HepG2 (cell line): ENCODE measurements at regions of chr20 and their contacts with region 1.

Region 1: DNA sequence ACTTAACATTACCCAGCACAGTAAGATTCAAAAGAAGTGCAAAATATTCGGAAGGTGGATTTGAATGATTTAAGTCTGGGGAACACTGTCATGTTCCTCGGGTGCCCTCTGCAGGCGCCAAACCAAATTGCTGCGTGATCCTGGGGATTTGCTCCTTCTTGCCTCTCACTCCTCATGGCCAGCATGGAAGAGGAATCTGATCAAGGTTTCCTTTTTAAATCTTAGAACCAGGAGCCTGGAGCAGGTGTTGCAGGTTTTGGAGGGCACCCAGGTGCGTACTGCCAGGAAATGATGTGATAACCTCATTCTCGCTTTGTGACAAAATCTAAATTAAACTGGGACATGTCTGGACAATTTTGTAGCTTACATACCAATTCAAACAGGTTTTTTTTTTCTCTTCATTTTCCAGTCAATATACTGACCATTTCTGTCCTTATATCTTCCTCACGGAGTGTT is 8.1 kb upstream of the PFDN4 start:
- DNase-seq: peak; percentile 82
- ATAC-seq: no peak
- H3K4me3 ChIP-seq: no peak overlapping the region
- H3K27ac ChIP-seq: no peak overlapping the region
- H3K4me1 ChIP-seq: peaks cover 51% of the 10 kb centered on the region
- H3K27me3 ChIP-seq: peaks cover 0 to 11% of the 10 kb centered on the region in 2 experiments; a peak in 1 of 5 replicates
- CTCF ChIP-seq: peak; percentile 95
- EP300 ChIP-seq: no peak
- POLR2A ChIP-seq: no peak
- RAD21 ChIP-seq: peak; percentile 97

Region 2: DNA sequence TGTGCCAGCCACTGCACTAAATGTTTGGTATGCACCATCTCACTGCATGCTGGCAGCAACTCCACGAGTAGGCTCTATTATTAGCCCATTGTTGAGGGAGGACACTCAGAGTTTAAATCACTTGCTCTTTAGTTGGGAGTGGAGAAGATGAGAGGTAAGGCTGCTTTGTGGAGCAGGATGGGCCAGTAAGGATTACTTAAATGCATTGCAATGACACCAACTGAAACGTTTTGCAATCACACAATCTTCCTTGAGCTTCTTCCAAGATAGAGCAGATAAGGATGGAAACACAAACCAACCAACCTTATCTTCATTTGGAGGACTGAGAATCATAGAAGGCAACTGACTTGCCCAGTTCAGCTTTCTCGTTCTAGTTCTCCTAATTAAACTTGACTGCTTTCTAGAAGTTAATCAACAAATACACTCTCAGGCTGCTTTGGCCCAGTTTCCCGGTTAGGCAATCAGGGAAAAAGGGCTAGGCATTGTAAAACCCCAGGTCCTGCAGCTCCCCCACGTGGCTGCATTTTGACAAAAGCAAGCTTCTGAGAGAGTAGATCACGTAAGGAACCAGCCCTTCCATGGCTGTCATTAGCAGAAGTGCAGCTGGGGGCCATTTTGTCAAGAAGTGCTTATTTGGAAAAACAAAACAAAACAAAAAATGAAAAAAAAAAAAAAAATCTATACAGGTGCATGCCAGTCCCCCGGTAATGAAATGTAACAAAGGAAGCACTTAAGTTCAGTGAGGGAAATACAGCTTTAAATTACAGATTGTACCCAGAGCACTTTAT is 260.0 kb before region 1 on chr20:
- CTCF ChIA-PET with region 1: interaction called, 5 read pairs
- POLR2A ChIA-PET with region 1: no interaction called
- in situ Hi-C with region 1: loop called (anchors 5 kb)
- intact Hi-C with region 1: loop called (anchors 2 kb)
- DNase-seq: peak; percentile 95
- ATAC-seq: peak; percentile 91
- H3K4me3 ChIP-seq: no peak overlapping the region; a peak in 1 of 6 replicates
- H3K27ac ChIP-seq: no peak overlapping the region
- H3K4me1 ChIP-seq: peaks cover 83% of the 10 kb centered on the region
- H3K27me3 ChIP-seq: no peaks in the 10 kb centered on the region; a peak in 1 of 5 replicates
- CTCF ChIP-seq: peak; percentile 94
- EP300 ChIP-seq: no peak
- POLR2A ChIP-seq: no peak
- RAD21 ChIP-seq: peak; percentile 95

Region 3: DNA sequence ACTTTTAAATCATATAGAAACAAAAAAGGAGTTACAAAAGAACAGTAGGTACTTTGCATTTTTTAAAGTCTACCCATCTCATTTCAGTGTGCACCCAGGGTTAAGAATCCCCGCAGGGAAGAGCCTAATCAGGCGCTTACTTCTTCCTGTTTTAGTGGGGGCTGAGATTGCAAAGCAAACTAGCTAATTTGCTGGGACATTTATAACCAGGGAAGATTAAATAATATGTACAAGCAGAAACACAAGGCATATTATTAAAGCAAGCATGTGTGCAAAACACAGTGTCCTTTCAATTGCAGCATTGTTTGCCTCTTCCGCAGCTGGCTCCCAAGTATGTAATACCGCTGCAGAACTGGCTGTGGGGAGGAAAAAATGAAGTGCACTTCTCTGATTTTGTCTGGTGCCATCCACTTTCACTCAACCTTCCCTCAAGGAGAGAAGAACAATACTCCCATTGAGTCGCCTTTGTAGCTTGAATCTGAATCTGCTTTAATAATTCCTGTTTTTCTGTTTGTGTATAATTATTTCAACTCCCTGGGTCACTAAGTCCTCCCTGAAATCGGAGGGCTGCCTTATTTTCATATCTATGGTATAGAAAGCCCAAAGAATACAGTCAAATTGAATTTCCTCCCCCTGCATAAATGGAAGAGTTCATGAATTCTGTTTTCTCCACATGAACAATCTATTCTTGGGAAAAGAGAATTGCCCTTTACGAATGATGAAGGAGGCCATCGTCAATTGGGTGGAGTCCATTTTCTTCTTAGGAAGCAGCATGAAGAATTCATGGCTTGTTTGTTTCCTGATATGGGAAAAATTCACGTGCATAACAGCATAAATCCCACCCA is 106.1 kb before region 1 on chr20:
- CTCF ChIA-PET with region 1: interaction called, 358 read pairs
- POLR2A ChIA-PET with region 1: interaction called, 40 read pairs
- in situ Hi-C with region 1: loop called (anchors 5 kb)
- intact Hi-C with region 1: loop called (anchors 1 kb)
- DNase-seq: no peak
- ATAC-seq: no peak
- H3K4me3 ChIP-seq: no peak overlapping the region
- H3K27ac ChIP-seq: no peak overlapping the region
- H3K4me1 ChIP-seq: peaks cover 23% of the 10 kb centered on the region
- H3K27me3 ChIP-seq: peaks cover 0 to 6% of the 10 kb centered on the region in 2 experiments; a peak in 1 of 5 replicates
- CTCF ChIP-seq: no peak
- EP300 ChIP-seq: no peak
- POLR2A ChIP-seq: no peak
- RAD21 ChIP-seq: no peak

Region 4: GRCh38 chr20:54115151-54115854 is 84.4 kb before region 1 on chr20:
- CTCF ChIA-PET with region 1: interaction called, 5 read pairs
- POLR2A ChIA-PET with region 1: interaction called, 18 read pairs
- in situ Hi-C with region 1: no loop called
- intact Hi-C with region 1: no loop called
- DNase-seq: no peak
- ATAC-seq: peak; percentile 31
- H3K4me3 ChIP-seq: no peak overlapping the region; a peak in 1 of 6 replicates
- H3K27ac ChIP-seq: peak overlapping the region; percentile 83
- H3K4me1 ChIP-seq: peaks cover 96% of the 10 kb centered on the region
- H3K27me3 ChIP-seq: no peaks in the 10 kb centered on the region
- CTCF ChIP-seq: no peak
- EP300 ChIP-seq: no peak
- POLR2A ChIP-seq: no peak
- RAD21 ChIP-seq: 0 out of 2 replicates have a peak, but pooled peaks have one; percentile 17

Region 5: DNA sequence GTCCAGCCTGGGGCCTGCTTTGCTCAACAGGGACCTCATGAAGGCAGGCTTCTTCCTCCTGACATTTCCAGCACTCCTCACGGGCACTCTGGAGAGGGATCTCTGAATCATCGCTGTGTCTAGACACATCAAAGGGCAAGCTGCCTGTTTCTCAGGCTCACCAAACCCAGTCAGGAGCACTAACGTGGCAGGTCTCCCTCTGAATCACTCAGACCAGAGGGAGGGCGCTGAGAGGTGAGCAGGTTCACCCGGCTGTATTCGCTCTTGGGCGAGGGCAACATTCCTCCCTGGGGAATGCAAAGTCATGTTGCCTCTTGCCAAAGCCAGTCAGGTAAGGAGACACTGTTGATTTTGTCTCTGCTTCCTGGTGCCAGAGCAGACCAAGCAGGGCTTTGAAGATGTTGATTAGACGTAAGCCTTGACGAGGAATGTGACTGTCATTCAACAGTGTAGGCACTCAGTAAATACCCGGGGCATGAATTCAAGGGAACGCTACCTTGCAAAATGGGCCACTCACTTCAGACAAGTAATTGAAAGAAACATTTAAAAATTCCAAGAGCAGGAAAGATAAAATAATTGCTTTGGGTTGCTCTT is 76.1 kb before region 1 on chr20:
- CTCF ChIA-PET with region 1: interaction called, 6 read pairs
- POLR2A ChIA-PET with region 1: interaction called, 45 read pairs
- in situ Hi-C with region 1: no loop called
- intact Hi-C with region 1: loop called (anchors 1 kb)
- DNase-seq: peak; percentile 100
- ATAC-seq: peak; percentile 98
- H3K4me3 ChIP-seq: peak overlapping the region in 2 of 3 experiments; percentile 30 to 59; a peak in 5 of 6 replicates
- H3K27ac ChIP-seq: peak overlapping the region; percentile 98
- H3K4me1 ChIP-seq: peaks cover 87% of the 10 kb centered on the region
- H3K27me3 ChIP-seq: no peaks in the 10 kb centered on the region
- CTCF ChIP-seq: peak; percentile 44; the same call in 1 of the 2 replicates
- EP300 ChIP-seq: peak; percentile 99 to 100
- POLR2A ChIP-seq: peak; percentile 77 to 97
- RAD21 ChIP-seq: peak; percentile 87

Region 6: DNA sequence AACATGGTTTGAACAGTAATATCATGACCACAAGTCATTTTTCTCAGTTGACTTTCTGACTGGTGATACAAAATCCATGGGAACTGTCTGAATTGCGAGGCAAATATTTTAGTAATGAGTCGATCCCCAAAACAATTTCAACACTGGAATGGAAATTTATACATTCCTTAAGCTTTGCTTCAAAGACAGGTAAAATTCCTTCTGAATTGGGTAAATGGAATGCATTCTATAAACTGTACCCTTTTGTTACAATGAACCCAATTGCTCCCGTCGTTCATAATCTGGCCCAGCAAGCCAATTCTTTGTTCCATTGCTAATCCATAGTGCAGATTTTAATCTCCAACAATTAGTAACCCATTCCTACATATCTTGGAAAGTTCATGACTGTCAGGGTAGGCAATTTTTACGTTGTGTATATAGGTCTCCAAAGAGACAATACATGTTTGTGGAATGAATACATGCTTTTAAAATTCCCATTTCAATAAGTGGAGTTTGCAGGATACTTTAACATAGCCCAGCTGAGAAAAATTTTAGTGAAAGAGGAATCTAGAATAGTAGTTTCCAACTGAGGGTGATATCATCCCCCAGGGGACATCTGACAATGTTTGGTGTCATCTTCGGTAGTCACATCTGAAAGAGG is 58.7 kb before region 1 on chr20:
- CTCF ChIA-PET with region 1: interaction called, 3 read pairs
- POLR2A ChIA-PET with region 1: interaction called, 7 read pairs
- in situ Hi-C with region 1: loop called (anchors 10 kb)
- intact Hi-C with region 1: loop called (anchors 2 kb)
- DNase-seq: peak; percentile 96
- ATAC-seq: peak; percentile 81
- H3K4me3 ChIP-seq: no peak overlapping the region
- H3K27ac ChIP-seq: peak overlapping the region; percentile 55
- H3K4me1 ChIP-seq: peaks cover 45% of the 10 kb centered on the region
- H3K27me3 ChIP-seq: no peaks in the 10 kb centered on the region
- CTCF ChIP-seq: no peak
- EP300 ChIP-seq: peak; percentile 69 to 75; a peak in 2 of 4 replicates
- POLR2A ChIP-seq: no peak
- RAD21 ChIP-seq: no peak

Region 7: GRCh38 chr20:54173653-54174456 is 25.9 kb before region 1 on chr20 and contains the start of gene CYP24A1:
- CTCF ChIA-PET with region 1: interaction called, 3 read pairs
- POLR2A ChIA-PET with region 1: interaction called, 19 read pairs
- in situ Hi-C with region 1: no loop called
- intact Hi-C with region 1: loop called (anchors 2 kb)
- DNase-seq: peak; percentile 80
- ATAC-seq: peak; percentile 68
- H3K4me3 ChIP-seq: peak within 1 kb of the TSS; percentile 48 to 64 (median 54)
- H3K27ac ChIP-seq: peak within 1 kb of the TSS; percentile 1
- H3K4me1 ChIP-seq: peaks cover 82% of the 10 kb centered on the region
- H3K27me3 ChIP-seq: no peaks in the 10 kb centered on the region
- CTCF ChIP-seq: peak; percentile 9; the same call in 1 of the 2 replicates
- EP300 ChIP-seq: no peak
- POLR2A ChIP-seq: peak in 1 of 2 experiments; percentile 62; a peak in 2 of 4 replicates
- RAD21 ChIP-seq: peak; percentile 23; the same call in 1 of the 2 replicates
- total RNA-seq, gene CYP24A1: 6.9 and 9.4 TPM in 2 replicates